Activated CD4-positive, alpha-beta T cell treated with anti-CD3 and anti-CD28 coated beads, Interleukin-2, amount 10 ng/mL, durations not matched to agents 24 days and 14 days (primary cell): ENCODE measurements at regions of chr11 and their contacts with region 1.

Region 1: GRCh38 chr11:19723572-19724342 is 11.1 kb downstream of the NAV2 start:
- DNase-seq: peak; percentile 79
- H3K4me3 Mint-ChIP-seq: peak overlapping the region; percentile 56
- H3K27ac Mint-ChIP-seq: peak overlapping the region; percentile 42
- H3K4me1 Mint-ChIP-seq: peaks cover 18% of the 10 kb centered on the region
- H3K27me3 Mint-ChIP-seq: peaks cover 16% of the 10 kb centered on the region

Region 2: DNA sequence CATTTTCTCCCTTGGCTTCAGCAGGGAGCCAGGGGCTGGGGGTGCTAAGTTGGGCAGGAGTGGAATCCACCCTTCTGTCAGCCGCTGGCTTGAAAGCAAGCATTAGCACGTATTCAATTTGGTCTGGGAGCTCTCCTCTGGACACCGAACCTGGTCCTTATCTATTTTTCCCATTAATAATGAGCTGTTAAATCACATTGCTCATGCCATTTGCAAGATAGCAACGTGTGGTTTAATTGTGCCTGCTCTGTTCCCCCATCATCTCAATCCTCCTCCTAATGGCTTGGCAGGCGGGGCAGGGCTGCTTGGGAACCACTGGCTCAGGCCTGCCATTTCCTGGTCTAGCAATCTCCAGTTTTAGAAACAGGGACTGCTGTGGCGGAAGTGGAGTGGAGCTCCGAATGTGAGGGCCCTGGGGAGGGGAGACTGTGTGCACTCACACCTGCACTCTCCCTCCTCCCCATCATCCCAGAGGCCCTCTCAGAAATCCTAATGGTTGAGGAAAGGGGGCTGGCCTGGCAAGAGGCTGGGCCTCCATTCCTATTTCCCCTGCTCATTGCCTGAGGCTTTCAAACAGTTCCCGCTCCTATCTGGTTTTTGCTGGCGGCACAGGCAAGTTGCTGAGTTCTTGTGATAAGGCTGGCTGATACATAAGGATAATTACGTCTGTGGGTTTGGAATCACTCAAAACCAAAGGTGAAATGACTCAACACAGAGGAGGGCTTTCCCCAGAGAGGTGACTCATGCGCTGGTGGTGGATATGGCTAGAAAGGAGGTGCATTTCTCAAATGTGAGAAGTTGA is 281.8 kb before region 1 on chr11:
- intact Hi-C with region 1: loop called (anchors 5 kb)
- DNase-seq: peak; percentile 74
- H3K4me3 Mint-ChIP-seq: no peak overlapping the region
- H3K27ac Mint-ChIP-seq: peak overlapping the region; percentile 65
- H3K4me1 Mint-ChIP-seq: peaks cover 14% of the 10 kb centered on the region
- H3K27me3 Mint-ChIP-seq: peaks cover 38% of the 10 kb centered on the region

Region 3: DNA sequence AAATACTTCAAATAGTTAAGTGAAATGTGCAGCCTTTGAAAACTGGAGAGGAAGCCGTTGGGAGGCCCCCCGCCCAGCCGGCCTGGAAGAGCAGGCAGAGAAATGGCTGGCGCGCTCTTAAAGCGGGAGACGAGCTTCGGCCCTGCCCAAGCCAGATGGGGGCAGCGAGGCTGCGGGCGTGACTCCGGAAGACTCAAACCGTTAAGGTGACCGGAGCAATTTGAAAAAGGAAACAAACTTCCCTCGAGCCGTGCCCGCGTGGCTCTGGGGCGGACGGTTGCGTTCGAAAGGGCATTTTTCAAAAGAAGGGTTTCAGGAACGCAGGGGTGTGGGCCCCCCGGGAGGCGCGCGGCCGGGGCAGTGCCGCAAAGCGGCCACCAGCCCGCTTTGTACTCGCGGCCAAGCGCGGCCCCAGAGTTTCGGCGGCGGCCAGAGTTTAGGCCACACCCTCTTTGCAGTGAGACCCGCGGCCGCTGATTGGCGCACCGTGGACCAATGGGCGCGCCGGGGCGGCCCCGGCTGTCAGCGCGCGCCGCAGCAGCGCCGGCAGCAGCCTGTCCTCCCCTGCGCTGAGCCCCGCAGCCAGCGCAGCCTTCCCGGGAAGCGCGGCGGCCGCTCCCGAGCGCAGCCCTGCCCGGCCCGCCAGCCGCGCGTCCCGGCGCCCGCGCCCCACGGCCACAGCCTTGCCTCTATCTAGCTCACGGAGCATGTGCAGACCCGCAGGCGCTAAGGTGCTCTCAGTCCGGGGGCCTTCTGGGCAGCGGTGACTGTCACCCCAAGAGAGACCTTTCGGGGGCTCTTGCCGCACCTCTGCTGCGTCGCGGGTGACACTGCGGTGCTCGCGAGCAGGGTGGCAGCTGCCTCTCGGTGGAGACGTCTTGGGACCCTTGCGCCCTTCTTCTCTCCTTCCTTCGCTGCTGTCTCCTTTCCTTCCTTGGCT is 11.2 kb before region 1 on chr11 and contains the start of gene NAV2:
- intact Hi-C with region 1: loop called (anchors 1 kb)
- DNase-seq: peak; percentile 94
- H3K4me3 Mint-ChIP-seq: peak within 1 kb of the TSS; percentile 88
- H3K27ac Mint-ChIP-seq: peak within 1 kb of the TSS; percentile 83
- H3K4me1 Mint-ChIP-seq: peaks cover 21% of the 10 kb centered on the region
- H3K27me3 Mint-ChIP-seq: peaks cover 64% of the 10 kb centered on the region
- total RNA-seq, gene NAV2: 0.28 TPM in 1 of 2 replicates, not detected in the other